Activated B cell treated with CpG ODN at 0.5 μM for 24 hours (primary cell): ENCODE measurements at regions of chr12 and their contacts with region 1.

Region 1: DNA sequence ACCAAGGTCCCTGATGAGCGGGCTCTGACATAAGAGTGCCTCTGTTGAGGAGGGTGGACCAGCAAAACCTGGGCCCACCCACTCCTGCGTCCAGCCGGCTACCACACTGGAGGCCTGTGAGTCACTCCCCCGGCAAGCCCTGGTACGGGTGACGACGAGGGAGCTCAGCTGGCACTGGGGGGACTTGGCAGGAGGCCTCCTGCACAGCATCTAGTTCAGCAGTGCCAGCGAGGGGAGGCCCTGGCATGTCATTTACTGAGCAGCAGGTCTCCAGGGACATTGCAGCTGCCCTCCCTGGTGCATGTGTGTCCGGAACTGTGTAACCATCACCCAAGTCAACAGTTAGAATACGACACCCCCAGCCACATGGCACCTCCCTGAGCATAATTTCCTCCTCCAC is 24.4 kb downstream of the CD9 start:
- DNase-seq: peak; percentile 22
- ATAC-seq: peak; percentile 91
- H3K4me3 Mint-ChIP-seq: no peak overlapping the region
- H3K27ac Mint-ChIP-seq: no peak overlapping the region
- H3K4me1 Mint-ChIP-seq: peaks cover 25% of the 10 kb centered on the region
- H3K27me3 Mint-ChIP-seq: peaks cover 14% of the 10 kb centered on the region
- CTCF ChIP-seq: no peak

Region 2: GRCh38 chr12:6278439-6279255 is 54.1 kb after region 1 on chr12:
- CTCF ChIA-PET with region 1: no interaction called
- POLR2A ChIA-PET with region 1: interaction called, 3 read pairs
- intact Hi-C with region 1: loop called (anchors 2 kb)
- DNase-seq: peak; percentile 95
- ATAC-seq: peak; percentile 98
- H3K4me3 Mint-ChIP-seq: peak overlapping the region; percentile 80
- H3K27ac Mint-ChIP-seq: no peak overlapping the region
- H3K4me1 Mint-ChIP-seq: peaks cover 6% of the 10 kb centered on the region
- H3K27me3 Mint-ChIP-seq: peaks cover 48% of the 10 kb centered on the region
- CTCF ChIP-seq: peak; percentile 71

Region 3: GRCh38 chr12:6890789-6891645 is 666.5 kb after region 1 on chr12:
- CTCF ChIA-PET with region 1: no interaction called
- POLR2A ChIA-PET with region 1: no interaction called
- intact Hi-C with region 1: no loop called
- DNase-seq: peak; percentile 97
- ATAC-seq: peak; percentile 93
- H3K4me3 Mint-ChIP-seq: peak overlapping the region; percentile 84
- H3K27ac Mint-ChIP-seq: peak overlapping the region; percentile 93
- H3K4me1 Mint-ChIP-seq: peaks cover 15% of the 10 kb centered on the region
- H3K27me3 Mint-ChIP-seq: no peaks in the 10 kb centered on the region
- CTCF ChIP-seq: peak; percentile 65